ENCODE measurements at regions of chr2 and their contacts with region 1.

Region 1: GRCh38 chr2:69306822-69307578 is 80.0 kb downstream of the GFPT1 start:
- DNase-seq: peak; percentile 33
- ATAC-seq: peak; percentile 92
- H3K4me3 ChIP-seq: peak overlapping the region; percentile 56 to 61
- H3K27ac ChIP-seq: peak overlapping the region; percentile 39; the same call in 1 of the 2 replicates
- H3K4me1 ChIP-seq: peaks cover 4 to 12% of the 10 kb centered on the region in 2 experiments; a peak in 1 of 4 replicates
- H3K27me3 ChIP-seq: no peaks in the 10 kb centered on the region
- CTCF ChIP-seq: peak; percentile 74 to 99 (median 94)
- POLR2A ChIP-seq: no peak
- RAD21 ChIP-seq: peak; percentile 93

Region 2: DNA sequence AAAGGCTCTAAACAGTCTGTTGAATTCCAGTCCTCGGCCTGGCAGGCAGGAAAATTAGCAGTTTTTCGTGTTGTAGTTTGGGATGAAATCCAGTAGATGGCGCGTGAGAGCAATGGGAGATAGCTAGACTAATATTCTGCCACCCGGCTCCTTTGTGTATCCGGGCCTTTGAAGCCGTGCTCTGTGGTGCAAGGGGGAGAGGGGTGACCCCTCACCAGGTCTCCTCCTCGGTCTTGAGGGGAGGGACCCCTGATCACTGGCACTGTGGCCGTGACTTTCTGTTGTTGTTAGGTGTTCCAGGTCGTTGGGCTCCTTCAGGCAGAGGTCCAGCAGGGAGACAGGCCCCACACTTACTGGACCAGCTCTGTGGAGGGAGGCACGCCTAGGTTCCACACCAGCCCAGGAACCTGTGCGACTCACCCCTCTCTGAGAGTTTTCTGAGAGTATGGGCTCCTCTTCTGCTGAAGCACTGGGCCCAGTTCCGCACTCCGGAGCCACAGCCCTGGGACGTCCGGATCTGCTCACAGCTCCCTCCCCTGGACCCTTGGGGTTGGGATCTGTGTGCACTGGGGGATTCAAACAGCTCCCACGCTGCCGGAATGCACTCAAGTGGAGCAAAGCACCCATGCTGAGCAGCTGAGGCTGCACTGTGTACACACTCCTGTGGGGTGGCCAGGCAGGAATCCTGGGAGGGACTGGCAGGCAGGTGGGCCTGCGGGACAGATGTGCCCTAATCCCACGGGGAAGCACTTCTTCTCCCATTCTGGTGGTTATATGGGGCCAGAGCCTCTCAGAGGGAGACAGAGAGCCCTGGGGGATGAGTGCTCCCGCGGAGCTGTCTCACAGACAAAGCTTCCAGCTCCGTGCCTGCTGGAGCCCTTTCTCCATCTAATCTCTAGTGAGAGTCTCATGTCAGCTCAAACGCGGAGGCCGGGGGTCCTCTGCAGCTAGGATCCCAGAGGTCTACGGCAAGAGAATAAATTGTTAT is 363.1 kb before region 1 on chr2:
- CTCF ChIA-PET with region 1: interaction called, 22 read pairs
- POLR2A ChIA-PET with region 1: no interaction called
- RAD21 ChIA-PET with region 1: no interaction called
- intact Hi-C with region 1: loop called (anchors 1 kb)
- DNase-seq: peak; percentile 34
- ATAC-seq: peak; percentile 94
- H3K4me3 ChIP-seq: no peak overlapping the region
- H3K27ac ChIP-seq: no peak overlapping the region
- H3K4me1 ChIP-seq: peaks cover 0 to 4% of the 10 kb centered on the region in 2 experiments; a peak in 1 of 4 replicates
- H3K27me3 ChIP-seq: no peaks in the 10 kb centered on the region
- CTCF ChIP-seq: peak; percentile 73 to 78 (median 78)
- POLR2A ChIP-seq: no peak
- RAD21 ChIP-seq: peak; percentile 66

Region 3: GRCh38 chr2:69012310-69013141 is 294.5 kb before region 1 on chr2:
- CTCF ChIA-PET with region 1: interaction called, 4 read pairs
- POLR2A ChIA-PET with region 1: no interaction called
- RAD21 ChIA-PET with region 1: interaction called in 1 of 2 experiments, 3 read pairs
- intact Hi-C with region 1: loop called (anchors 1 kb)
- DNase-seq: peak; percentile 23
- ATAC-seq: peak; percentile 72
- H3K4me3 ChIP-seq: peak overlapping the region; percentile 79 to 88
- H3K27ac ChIP-seq: peak overlapping the region; percentile 51
- H3K4me1 ChIP-seq: peaks cover 10 to 16% of the 10 kb centered on the region in 2 experiments
- H3K27me3 ChIP-seq: no peaks in the 10 kb centered on the region
- CTCF ChIP-seq: peak; percentile 74 to 91 (median 78)
- POLR2A ChIP-seq: no peak
- RAD21 ChIP-seq: peak; percentile 79

Region 4: DNA sequence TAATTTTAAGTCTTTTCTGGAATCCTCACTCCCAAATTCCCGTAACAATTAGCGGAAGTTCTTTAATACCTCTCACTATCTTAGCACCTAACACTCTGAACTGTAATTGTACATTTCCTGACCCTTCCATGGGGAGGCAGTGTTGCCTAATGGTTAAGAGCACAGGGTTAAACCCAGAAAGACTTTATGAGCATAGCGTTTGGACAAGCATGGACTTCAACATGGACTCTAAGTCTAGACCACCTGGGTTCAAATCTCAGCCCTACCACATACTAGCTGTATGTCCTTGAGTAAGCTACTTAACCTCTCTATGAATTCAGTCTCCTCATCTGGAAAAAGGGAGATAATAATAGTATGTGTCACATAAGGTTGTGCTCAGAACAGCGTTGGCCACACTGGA is 281.0 kb before region 1 on chr2:
- CTCF ChIA-PET with region 1: interaction called, 4 read pairs
- POLR2A ChIA-PET with region 1: no interaction called
- RAD21 ChIA-PET with region 1: no interaction called
- intact Hi-C with region 1: loop called (anchors 1 kb)
- DNase-seq: peak; percentile 36
- ATAC-seq: peak; percentile 91
- H3K4me3 ChIP-seq: no peak overlapping the region
- H3K27ac ChIP-seq: no peak overlapping the region
- H3K4me1 ChIP-seq: peaks cover 0 to 6% of the 10 kb centered on the region in 2 experiments; a peak in 1 of 4 replicates
- H3K27me3 ChIP-seq: no peaks in the 10 kb centered on the region
- CTCF ChIP-seq: peak; percentile 57 to 83 (median 74); a peak in 5 of 6 replicates
- POLR2A ChIP-seq: no peak
- RAD21 ChIP-seq: peak; percentile 84

Region 5: DNA sequence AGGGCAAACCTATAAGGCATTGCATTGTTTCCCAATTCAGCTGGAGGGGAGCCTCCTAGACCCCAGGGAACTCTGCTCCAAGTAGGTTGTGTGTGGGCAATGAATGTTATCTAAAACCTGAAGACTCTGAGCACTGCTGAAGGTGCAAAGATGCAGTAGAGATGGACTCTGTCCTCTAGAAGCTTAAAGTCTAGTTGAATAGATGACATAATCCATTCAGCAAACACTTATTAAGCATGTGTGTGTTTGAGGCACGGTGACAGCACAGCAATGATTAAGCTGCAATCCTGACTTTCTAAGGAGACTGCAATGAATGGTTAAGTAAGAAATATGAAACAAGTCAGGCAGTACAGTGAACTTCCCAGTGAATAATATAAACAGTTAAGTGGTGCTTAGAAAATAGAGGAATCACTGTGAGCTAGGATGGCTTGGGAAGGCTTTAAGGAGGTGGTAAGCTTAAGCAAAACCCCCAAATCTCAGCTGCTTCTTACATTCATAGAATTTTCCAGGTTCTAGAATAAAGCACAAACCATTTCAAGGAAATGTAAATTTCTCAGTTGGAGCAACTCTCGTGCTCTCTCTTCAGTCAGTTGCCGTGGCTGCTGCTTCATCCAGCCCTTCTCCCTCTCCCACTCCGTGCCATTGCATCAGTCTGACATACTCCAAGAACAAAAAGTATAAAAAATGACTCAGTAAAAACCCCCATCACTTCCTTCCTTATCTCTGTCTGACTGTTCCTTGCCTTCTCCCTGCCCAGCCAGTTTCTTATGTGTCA is 627.0 kb after region 1 on chr2:
- CTCF ChIA-PET with region 1: no interaction called
- POLR2A ChIA-PET with region 1: no interaction called
- RAD21 ChIA-PET with region 1: no interaction called
- intact Hi-C with region 1: no loop called
- DNase-seq: no peak
- ATAC-seq: no peak
- H3K4me3 ChIP-seq: no peak overlapping the region
- H3K27ac ChIP-seq: no peak overlapping the region
- H3K4me1 ChIP-seq: peaks cover 0 to 9% of the 10 kb centered on the region in 2 experiments; a peak in 1 of 4 replicates
- H3K27me3 ChIP-seq: no peaks in the 10 kb centered on the region
- CTCF ChIP-seq: no peak
- POLR2A ChIP-seq: no peak
- RAD21 ChIP-seq: no peak